ENCODE measurements at regions of chr19 and their contacts with region 1.

Region 1: DNA sequence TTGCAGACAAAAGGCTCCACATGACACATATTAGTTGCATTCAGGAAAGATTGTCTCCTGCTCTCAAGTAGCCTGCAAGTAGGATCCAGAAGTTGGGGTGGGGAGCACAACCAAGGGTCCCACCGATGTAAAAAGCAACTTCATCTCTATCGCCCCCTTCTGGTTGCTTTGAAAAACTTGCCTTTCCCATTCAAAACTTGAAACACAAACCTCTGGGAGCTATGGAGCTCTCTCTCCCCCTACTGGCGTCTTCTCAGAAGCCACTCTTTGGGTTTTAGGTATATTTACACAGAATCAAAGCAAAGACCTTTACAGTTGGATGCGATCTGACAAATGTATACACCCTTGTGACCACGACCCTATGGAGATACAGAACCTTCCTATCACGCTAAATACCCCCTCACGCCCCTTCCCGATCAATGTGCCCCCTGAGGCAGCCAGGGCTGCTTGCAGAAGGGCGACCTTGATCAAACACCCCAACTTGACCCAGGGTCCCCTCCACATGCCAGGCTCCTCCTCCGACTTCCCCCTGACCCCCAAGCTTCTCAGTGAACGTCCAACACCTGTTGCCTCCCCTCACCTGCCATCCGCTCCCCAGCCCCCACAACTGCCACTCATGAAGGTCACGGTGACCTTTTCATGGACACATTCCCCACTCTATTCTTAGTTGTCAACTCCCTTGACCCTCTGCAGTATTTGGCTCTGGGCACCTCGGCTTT is 10.1 kb downstream of the NOSIP start:
- H3K4me3 ChIP-seq: no peak overlapping the region
- H3K27ac ChIP-seq: no peak overlapping the region
- H3K4me1 ChIP-seq: peaks cover 19% of the 10 kb centered on the region
- CTCF ChIP-seq: peak; percentile 92

Region 2: DNA sequence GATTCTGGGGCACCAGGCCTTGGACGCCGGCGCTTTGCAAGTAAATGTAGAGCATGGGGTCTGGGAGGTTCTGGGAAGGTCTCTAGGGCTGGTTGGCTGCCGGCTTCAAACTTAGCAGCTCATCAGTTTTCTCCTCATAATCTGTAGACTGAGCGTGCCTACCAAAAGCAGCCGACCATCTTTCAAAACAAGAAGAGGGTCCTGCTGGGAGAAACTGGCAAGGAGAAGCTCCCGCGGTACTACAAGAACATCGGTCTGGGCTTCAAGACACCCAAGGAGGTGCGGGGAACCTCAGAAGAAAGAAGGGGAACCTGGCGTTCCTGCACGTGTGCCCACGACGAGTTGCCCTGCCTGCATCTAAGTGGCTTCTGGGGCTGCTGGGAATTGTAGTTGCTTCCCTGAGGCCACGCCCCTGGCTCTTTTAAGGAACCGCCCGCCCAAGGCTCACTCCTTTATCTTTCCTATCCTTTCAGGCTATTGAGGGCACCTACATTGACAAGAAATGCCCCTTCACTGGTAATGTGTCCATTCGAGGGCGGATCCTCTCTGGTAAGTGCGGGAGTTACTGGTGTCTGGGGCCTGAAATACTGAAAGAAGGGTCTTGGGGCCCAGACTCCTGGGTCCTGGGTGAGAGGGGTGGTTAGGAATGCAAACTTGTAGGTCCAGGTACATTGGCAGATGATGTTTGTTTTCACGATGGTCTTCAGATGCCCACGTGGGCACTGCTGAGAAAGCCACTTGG is 73.1 kb before region 1 on chr19:
- CTCF ChIA-PET with region 1: interaction called, 168 read pairs
- POLR2A ChIA-PET with region 1: interaction called, 10 read pairs
- H3K4me3 ChIP-seq: peak overlapping the region; percentile 89
- H3K27ac ChIP-seq: peak overlapping the region; percentile 87
- H3K4me1 ChIP-seq: peaks cover 7% of the 10 kb centered on the region
- CTCF ChIP-seq: no peak

Region 3: GRCh38 chr19:49533551-49534488 is 36.5 kb before region 1 on chr19:
- CTCF ChIA-PET with region 1: interaction called, 12 read pairs
- POLR2A ChIA-PET with region 1: no interaction called
- H3K4me3 ChIP-seq: peak overlapping the region; percentile 56
- H3K27ac ChIP-seq: no peak overlapping the region
- H3K4me1 ChIP-seq: no peaks in the 10 kb centered on the region
- CTCF ChIP-seq: no peak

Region 4: GRCh38 chr19:49555600-49556411 is 14.5 kb before region 1 on chr19:
- CTCF ChIA-PET with region 1: interaction called, 99 read pairs
- POLR2A ChIA-PET with region 1: interaction called, 5 read pairs
- H3K4me3 ChIP-seq: no peak overlapping the region
- H3K27ac ChIP-seq: no peak overlapping the region
- H3K4me1 ChIP-seq: no peaks in the 10 kb centered on the region
- CTCF ChIP-seq: no peak

Region 5: GRCh38 chr19:49601482-49602038 is 31.3 kb after region 1 on chr19:
- CTCF ChIA-PET with region 1: no interaction called
- POLR2A ChIA-PET with region 1: no interaction called
- H3K4me3 ChIP-seq: no peak overlapping the region
- H3K27ac ChIP-seq: no peak overlapping the region
- H3K4me1 ChIP-seq: no peaks in the 10 kb centered on the region
- CTCF ChIP-seq: no peak